K562 (cell line): ENCODE measurements at regions of chr14 and their contacts with region 1.

Region 1: GRCh38 chr14:76257111-76257803 is 105.5 kb downstream of the GPATCH2L start:
- DNase-seq: peak; percentile 68 to 83 (median 74)
- ATAC-seq: peak; percentile 76
- H3K4me3 ChIP-seq: peak overlapping the region; percentile 2; the same call in 1 of the 2 replicates
- H3K27ac ChIP-seq: peak overlapping the region; percentile 91
- H3K4me1 ChIP-seq: peaks cover 15 to 46% of the 10 kb centered on the region in 2 experiments
- H3K27me3 ChIP-seq: no peaks in the 10 kb centered on the region
- CTCF ChIP-seq: no peak
- EP300 ChIP-seq: peak; percentile 88
- POLR2A ChIP-seq: no peak
- RAD21 ChIP-seq: no peak

Region 2: DNA sequence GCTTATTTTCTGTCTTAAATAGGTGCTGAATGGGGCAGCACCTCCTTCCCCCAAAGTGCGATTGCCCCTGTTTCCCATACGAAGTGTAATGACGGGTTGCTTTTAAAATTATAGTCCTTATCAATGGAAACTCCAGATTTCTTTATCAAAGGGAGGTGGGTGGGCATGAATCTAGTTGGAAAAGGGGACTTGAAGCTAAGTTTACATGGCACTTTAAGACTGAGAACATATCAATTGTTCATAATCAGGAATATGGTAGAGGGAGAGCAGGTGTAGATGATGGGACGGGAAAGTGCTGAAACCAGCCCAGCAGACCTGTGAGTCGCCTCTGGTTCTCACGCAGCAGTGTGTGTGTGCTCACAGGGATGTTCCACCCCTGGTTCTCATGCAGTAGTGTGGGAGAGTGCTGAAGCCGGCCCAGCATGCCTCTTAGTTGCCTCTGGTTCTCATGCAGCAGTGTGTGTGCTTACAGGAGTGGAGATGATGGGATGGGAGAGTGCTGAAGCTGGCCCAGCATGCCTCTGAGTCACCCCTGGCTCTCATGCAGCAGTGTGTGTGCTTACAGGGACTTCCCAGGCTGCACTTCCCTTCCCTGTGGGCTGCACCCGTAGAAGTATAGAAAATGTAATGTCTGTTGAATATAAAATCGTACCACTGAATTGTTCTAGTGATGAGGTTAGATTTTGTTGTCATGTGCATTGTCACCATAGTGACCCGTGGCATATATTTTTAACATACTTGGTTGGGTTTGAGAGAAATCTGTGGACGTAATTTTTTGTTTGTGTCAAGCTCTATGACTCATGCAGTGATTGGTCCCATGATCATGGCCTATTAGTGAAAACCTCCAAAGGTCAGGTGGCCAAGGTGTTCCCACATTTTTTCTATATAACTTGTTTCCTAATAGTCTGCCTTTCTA is 53.9 kb before region 1 on chr14:
- CTCF ChIA-PET with region 1: no interaction called
- POLR2A ChIA-PET with region 1: no interaction called
- in situ Hi-C with region 1: no loop called
- intact Hi-C with region 1: loop called (anchors 5 kb)
- DNase-seq: no peak
- ATAC-seq: no peak
- H3K4me3 ChIP-seq: no peak overlapping the region
- H3K27ac ChIP-seq: no peak overlapping the region
- H3K4me1 ChIP-seq: peaks cover 0 to 7% of the 10 kb centered on the region in 2 experiments; a peak in 2 of 5 replicates
- H3K27me3 ChIP-seq: no peaks in the 10 kb centered on the region
- CTCF ChIP-seq: no peak
- EP300 ChIP-seq: no peak
- POLR2A ChIP-seq: no peak
- RAD21 ChIP-seq: no peak

Region 3: GRCh38 chr14:76236172-76237130 is 20.8 kb before region 1 on chr14:
- CTCF ChIA-PET with region 1: no interaction called
- POLR2A ChIA-PET with region 1: no interaction called
- in situ Hi-C with region 1: no loop called
- intact Hi-C with region 1: no loop called
- DNase-seq: no peak
- ATAC-seq: no peak
- H3K4me3 ChIP-seq: no peak overlapping the region
- H3K27ac ChIP-seq: no peak overlapping the region
- H3K4me1 ChIP-seq: no peaks in the 10 kb centered on the region
- H3K27me3 ChIP-seq: no peaks in the 10 kb centered on the region
- CTCF ChIP-seq: no peak
- EP300 ChIP-seq: no peak
- POLR2A ChIP-seq: no peak
- RAD21 ChIP-seq: no peak

Region 4: DNA sequence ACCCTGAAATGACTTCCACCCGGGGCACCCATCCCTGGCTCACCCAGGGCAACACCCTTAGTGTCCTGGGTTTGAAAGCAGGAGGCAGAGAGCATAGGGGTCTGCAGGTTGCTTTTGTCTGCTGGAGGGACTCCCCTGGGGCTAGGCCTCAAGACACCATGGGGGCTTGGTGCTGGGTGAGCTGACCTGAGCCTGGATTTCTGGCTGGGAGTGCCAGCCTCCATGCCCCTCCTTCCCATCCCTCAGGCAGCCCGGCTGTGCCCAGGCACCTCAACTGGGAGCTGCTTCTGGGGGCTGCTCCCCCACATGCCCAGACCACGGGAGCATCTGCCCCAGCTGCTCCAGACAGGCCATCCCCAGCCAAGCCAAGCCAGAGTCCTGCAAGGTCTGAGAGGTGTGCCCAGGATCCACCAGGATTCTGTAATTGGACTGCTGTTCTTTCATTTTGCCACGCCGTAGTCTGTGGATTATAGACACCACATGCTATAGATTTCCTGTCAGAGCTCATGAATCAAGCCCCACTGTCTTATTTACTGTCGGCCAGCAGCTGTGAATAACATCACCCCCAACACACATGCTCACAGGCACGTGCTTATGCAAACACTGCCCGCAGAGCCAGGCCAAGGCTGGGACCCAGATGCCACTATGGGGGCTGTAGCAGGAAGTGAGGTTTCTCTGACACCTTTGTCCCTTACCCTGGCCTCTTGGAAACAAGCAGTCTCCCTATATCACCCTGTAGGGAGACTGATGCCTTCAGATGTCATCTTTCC is 89.3 kb after region 1 on chr14:
- CTCF ChIA-PET with region 1: no interaction called
- POLR2A ChIA-PET with region 1: no interaction called
- in situ Hi-C with region 1: no loop called
- intact Hi-C with region 1: no loop called
- DNase-seq: no peak
- ATAC-seq: no peak
- H3K4me3 ChIP-seq: no peak overlapping the region
- H3K27ac ChIP-seq: no peak overlapping the region
- H3K4me1 ChIP-seq: peaks cover 0 to 3% of the 10 kb centered on the region in 2 experiments; a peak in 1 of 5 replicates
- H3K27me3 ChIP-seq: no peaks in the 10 kb centered on the region
- CTCF ChIP-seq: no peak
- EP300 ChIP-seq: no peak
- POLR2A ChIP-seq: no peak
- RAD21 ChIP-seq: no peak

Region 5: DNA sequence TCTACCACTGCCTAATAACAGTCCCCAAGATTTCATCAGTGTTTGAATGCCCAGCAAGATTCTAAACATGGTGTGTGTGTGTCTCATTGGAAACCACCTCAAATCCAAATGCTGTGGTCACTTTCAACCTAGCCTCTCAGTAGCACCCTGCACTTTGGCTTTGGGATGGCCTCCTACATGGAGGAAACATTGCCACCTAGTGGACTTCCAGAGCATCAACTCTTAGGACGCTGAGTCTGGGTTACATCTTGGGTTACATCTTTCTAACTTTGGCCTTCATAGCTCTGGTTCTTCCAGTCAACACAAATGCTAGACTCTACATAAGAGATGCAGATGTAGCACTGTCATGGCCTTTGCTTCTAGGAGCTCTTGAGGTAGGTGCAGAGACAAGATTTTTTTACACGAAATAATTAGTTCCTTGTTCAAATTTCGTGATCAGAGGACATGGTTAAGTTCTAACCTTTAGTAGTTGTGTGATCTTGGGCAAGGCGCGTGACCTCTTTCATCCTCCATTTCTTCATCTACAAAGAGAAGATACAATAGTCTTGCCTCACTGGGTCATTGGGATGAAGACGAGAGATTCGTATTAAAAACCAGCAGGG is 390.5 kb after region 1 on chr14:
- CTCF ChIA-PET with region 1: no interaction called
- POLR2A ChIA-PET with region 1: no interaction called
- in situ Hi-C with region 1: no loop called
- intact Hi-C with region 1: no loop called
- DNase-seq: peak; percentile 53 to 61 (median 54)
- ATAC-seq: peak; percentile 93
- H3K4me3 ChIP-seq: no peak overlapping the region
- H3K27ac ChIP-seq: no peak overlapping the region
- H3K4me1 ChIP-seq: no peaks in the 10 kb centered on the region
- H3K27me3 ChIP-seq: peaks cover 6 to 31% of the 10 kb centered on the region in 2 experiments; a peak in 3 of 5 replicates
- CTCF ChIP-seq: peak; percentile 69 to 71 (median 70)
- EP300 ChIP-seq: no peak
- POLR2A ChIP-seq: no peak
- RAD21 ChIP-seq: peak; percentile 27 to 71; a peak in 3 of 4 replicates